ENCODE measurements at regions of chr18 and their contacts with region 1.

Region 1: GRCh38 chr18:31101183-31102024 is 817 bp downstream of the DSC2 start:
- DNase-seq: peak; percentile 73
- H3K4me3 Mint-ChIP-seq: peak overlapping the region; percentile 89
- H3K27ac Mint-ChIP-seq: peak overlapping the region; percentile 86
- H3K4me1 Mint-ChIP-seq: peaks cover 44% of the 10 kb centered on the region
- H3K27me3 Mint-ChIP-seq: no peaks in the 10 kb centered on the region
- CTCF ChIP-seq: no peak

Region 2: GRCh38 chr18:31010601-31011000 is 90.8 kb before region 1 on chr18:
- CTCF ChIA-PET with region 1: no interaction called
- intact Hi-C with region 1: loop called (anchors 5 kb)
- DNase-seq: no peak
- H3K4me3 Mint-ChIP-seq: no peak overlapping the region
- H3K27ac Mint-ChIP-seq: no peak overlapping the region
- H3K4me1 Mint-ChIP-seq: peaks cover 8% of the 10 kb centered on the region
- H3K27me3 Mint-ChIP-seq: no peaks in the 10 kb centered on the region
- CTCF ChIP-seq: no peak

Region 3: DNA sequence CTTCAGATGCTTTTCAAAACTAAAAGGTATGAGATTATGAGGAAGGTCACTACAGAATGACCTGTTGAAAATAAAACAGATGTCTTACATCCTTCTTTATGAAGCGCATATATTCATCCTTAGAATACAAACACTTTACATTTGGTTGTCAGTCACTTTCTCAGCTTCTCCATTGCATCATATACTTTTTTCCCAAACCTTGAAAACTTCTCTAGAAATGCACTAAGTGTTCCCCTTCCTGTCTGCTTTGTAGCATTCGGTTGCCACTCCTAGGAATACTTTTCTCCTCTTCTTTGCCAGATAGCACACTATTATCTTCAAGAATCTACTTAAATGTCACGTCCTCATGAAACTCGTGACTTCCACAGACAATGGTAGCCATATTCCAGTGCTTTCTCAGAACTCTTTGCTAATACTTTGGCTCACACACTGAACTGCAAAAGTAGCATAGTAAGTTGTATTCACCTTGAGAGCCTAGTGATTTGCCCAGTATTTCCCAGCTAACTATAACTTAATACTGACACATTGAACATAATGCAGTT is 33.7 kb after region 1 on chr18:
- CTCF ChIA-PET with region 1: no interaction called
- intact Hi-C with region 1: loop called (anchors 5 kb)
- DNase-seq: no peak
- H3K4me3 Mint-ChIP-seq: no peak overlapping the region
- H3K27ac Mint-ChIP-seq: no peak overlapping the region
- H3K4me1 Mint-ChIP-seq: no peaks in the 10 kb centered on the region
- H3K27me3 Mint-ChIP-seq: no peaks in the 10 kb centered on the region
- CTCF ChIP-seq: no peak

Region 4: DNA sequence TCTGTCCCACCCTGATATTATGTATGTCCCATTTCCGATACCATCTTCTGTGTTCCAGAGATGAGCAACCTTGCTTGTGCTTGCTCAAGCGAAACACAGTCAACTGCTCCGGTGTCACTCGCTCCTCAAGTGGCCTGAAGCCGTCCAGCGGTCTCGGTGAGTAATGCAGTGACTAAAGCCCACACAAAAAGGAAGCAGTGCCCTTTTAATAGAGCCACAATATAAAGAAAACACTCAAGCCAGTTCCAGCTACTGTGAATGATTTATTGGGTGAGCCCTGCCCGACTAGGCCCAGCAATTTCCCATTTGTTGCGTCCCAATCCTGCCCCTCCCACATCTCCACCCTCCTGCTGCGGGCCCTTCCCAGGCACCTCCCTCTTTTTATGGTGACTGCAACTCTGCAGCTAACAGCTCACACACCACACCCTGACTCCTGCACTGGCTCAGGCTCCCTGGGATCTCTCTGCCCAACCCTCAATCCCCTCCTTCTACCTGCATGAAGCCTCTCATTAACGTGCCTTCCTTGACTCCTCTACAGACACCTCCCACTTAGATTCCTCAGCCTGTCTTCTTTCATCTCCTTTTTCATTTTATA is 105.5 kb after region 1 on chr18:
- CTCF ChIA-PET with region 1: interaction called, 5 read pairs
- intact Hi-C with region 1: loop called (anchors 2 kb)
- DNase-seq: peak; percentile 92
- H3K4me3 Mint-ChIP-seq: peak overlapping the region; percentile 54
- H3K27ac Mint-ChIP-seq: peak overlapping the region; percentile 74
- H3K4me1 Mint-ChIP-seq: peaks cover 68% of the 10 kb centered on the region
- H3K27me3 Mint-ChIP-seq: no peaks in the 10 kb centered on the region
- CTCF ChIP-seq: peak; percentile 32

Region 5: GRCh38 chr18:31241900-31242409 is 140.6 kb after region 1 on chr18:
- CTCF ChIA-PET with region 1: interaction called, 13 read pairs
- intact Hi-C with region 1: loop called (anchors 2 kb)
- DNase-seq: peak; percentile 86
- H3K4me3 Mint-ChIP-seq: peak overlapping the region; percentile 30
- H3K27ac Mint-ChIP-seq: peak overlapping the region; percentile 92
- H3K4me1 Mint-ChIP-seq: peaks cover 65% of the 10 kb centered on the region
- H3K27me3 Mint-ChIP-seq: no peaks in the 10 kb centered on the region
- CTCF ChIP-seq: peak; percentile 92

Region 6: GRCh38 chr18:31399306-31400032 is 298.1 kb after region 1 on chr18:
- CTCF ChIA-PET with region 1: no interaction called
- intact Hi-C with region 1: loop called (anchors 1 kb)
- DNase-seq: peak; percentile 21
- H3K4me3 Mint-ChIP-seq: no peak overlapping the region
- H3K27ac Mint-ChIP-seq: peak overlapping the region; percentile 49
- H3K4me1 Mint-ChIP-seq: peaks cover 50% of the 10 kb centered on the region
- H3K27me3 Mint-ChIP-seq: no peaks in the 10 kb centered on the region
- CTCF ChIP-seq: no peak

Region 7: GRCh38 chr18:31497837-31498573 is 396.6 kb after region 1 on chr18 and contains the start of gene DSG2:
- CTCF ChIA-PET with region 1: no interaction called
- intact Hi-C with region 1: loop called (anchors 10 kb)
- DNase-seq: peak; percentile 87
- H3K4me3 Mint-ChIP-seq: peak within 1 kb of the TSS; percentile 80
- H3K27ac Mint-ChIP-seq: peak within 1 kb of the TSS; percentile 85
- H3K4me1 Mint-ChIP-seq: peaks cover 17% of the 10 kb centered on the region
- H3K27me3 Mint-ChIP-seq: no peaks in the 10 kb centered on the region
- CTCF ChIP-seq: no peak
- total RNA-seq, gene DSG2: 194 and 196 TPM in 2 replicates

Measured in Calu3 (cell line).